IMR-90 (cell line): ENCODE measurements at regions of chr3 and their contacts with region 1.

Region 1: DNA sequence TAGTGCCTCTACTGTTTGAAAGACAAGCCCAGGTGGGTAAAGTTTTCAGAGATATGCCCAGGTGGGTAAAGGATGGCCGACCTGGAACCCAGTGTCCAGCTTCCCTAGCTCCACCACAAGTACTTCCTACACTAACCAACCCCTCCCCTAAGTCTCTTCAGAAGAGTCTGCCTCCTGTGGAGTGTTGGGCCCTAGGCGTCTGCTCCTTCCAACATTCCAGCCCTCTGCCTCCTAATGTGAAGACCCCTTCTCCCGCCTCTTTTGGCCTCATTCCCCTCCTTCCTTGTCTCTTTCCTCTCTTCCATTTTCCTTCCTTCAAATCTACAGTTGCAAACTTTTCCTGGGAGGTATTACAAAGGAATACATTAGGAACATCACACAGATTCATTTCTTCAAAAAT is 38.6 kb downstream of the CNTN3 start:
- DNase-seq: no peak
- ATAC-seq: no peak
- H3K4me3 ChIP-seq: no peak overlapping the region
- H3K27ac ChIP-seq: no peak overlapping the region
- H3K4me1 ChIP-seq: no peaks in the 10 kb centered on the region
- H3K27me3 ChIP-seq: no peaks in the 10 kb centered on the region
- CTCF ChIP-seq: no peak
- POLR2A ChIP-seq: no peak
- RAD21 ChIP-seq: no peak

Region 2: DNA sequence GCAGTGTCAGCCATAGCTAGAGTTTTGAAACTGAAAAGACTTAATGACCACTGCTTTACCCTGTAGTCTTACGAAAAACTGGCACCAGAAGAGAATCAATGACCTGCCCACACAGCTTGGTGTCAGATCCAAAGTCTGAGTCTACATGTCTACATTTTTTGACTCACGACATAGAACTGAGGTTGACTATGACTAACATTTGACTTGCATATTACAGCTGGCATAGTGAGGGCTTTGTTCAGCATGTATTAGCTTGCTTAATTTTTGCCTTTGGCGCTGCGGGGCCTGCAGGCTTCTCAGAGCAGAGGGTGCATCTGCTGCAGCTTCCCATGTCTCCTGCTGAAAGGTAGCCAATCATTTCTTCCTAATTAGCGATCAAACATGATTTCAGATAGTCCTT is 1347.4 kb before region 1 on chr3:
- CTCF ChIA-PET with region 1: no interaction called
- POLR2A ChIA-PET with region 1: no interaction called
- dilution Hi-C with region 1: no loop called
- in situ Hi-C with region 1: no loop called
- intact Hi-C with region 1: loop called (anchors 10 kb)
- DNase-seq: no peak
- ATAC-seq: no peak
- H3K4me3 ChIP-seq: no peak overlapping the region
- H3K27ac ChIP-seq: no peak overlapping the region
- H3K4me1 ChIP-seq: no peaks in the 10 kb centered on the region
- H3K27me3 ChIP-seq: no peaks in the 10 kb centered on the region
- CTCF ChIP-seq: no peak
- POLR2A ChIP-seq: no peak
- RAD21 ChIP-seq: no peak

Region 3: GRCh38 chr3:73745526-73746191 is 830.2 kb before region 1 on chr3:
- CTCF ChIA-PET with region 1: no interaction called
- POLR2A ChIA-PET with region 1: no interaction called
- dilution Hi-C with region 1: no loop called
- in situ Hi-C with region 1: no loop called
- intact Hi-C with region 1: no loop called
- DNase-seq: peak; percentile 33
- ATAC-seq: no peak
- H3K4me3 ChIP-seq: no peak overlapping the region
- H3K27ac ChIP-seq: no peak overlapping the region
- H3K4me1 ChIP-seq: no peaks in the 10 kb centered on the region
- H3K27me3 ChIP-seq: no peaks in the 10 kb centered on the region
- CTCF ChIP-seq: no peak
- POLR2A ChIP-seq: no peak
- RAD21 ChIP-seq: no peak